ENCODE measurements at regions of chr17 and their contacts with region 1.

Region 1: DNA sequence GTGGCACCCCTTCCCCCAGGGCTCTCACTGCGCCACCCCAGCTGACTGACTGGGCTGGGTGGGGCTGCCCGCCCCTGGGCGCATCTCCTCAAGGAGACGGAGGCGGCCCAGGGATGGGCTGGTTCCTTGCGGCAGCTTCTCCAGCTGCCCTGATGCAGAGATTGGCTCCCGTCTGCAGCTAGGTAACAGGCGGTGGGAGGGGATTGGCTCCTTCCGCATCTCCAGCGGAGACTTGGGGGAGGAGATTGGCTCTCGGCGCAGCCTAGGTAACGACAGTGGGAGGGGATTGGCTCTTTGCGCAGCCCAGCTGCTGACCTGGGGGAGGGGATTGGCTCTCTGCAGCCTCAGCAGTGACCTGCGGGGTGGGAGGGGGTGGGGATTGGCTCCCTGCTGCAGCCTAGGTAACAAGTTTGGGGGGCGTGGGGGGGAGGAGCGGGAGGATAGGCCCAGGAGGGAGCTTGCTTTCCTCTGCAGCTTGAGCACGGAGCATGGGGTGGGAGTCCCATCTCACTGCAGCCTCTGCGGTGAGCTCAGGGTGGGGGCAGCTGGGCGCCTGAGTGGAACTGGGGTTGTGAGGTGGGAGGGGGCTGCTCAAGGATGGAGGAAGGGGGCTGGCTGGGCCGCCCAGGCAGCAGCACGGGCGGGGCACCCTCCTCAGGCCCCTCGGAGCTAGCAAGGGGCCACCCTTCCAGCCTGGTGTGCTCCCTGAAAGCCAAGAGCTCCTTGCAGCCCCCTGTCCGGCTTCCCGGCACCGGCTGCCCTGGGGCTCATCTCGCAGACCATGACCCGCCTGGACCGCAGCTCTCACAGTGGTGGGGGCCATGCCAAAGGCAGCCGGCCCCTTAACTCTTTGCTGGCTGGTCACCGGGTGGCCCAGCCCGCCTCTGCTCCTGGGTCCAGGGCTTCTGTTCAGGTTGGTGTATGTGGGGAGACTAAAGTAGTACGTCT is 6.4 kb downstream of the NFE2L1 start:
- DNase-seq: no peak
- ATAC-seq: peak; percentile 7
- H3K4me3 ChIP-seq: peak overlapping the region; percentile 64; the same call in 1 of the 2 replicates
- H3K27ac ChIP-seq: peak overlapping the region; percentile 68
- H3K4me1 ChIP-seq: peaks cover 29% of the 10 kb centered on the region
- H3K27me3 ChIP-seq: no peaks in the 10 kb centered on the region
- CTCF ChIP-seq: no peak
- EP300 ChIP-seq: no peak
- POLR2A ChIP-seq: no peak; the same call in 1 of the 2 replicates
- RAD21 ChIP-seq: no peak

Region 2: DNA sequence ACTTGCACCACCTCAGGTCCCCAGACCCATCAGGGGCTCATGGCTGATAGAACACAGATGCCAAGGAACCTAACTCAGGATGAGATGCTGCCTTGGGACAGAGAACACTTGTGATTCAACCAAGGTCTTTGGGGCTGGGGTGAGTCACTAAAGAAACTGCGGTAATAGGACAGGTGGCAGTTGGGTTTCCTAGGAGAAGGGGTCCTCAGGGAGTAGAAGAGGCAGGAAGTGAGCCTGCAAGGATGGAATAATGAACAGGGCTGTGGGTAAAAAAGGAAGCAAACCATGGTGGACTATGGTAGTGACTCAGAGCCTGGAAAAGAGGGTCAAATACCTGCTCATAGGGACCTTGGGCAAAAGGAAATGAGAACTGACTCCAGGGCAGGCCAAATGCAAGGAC is 119.7 kb before region 1 on chr17:
- CTCF ChIA-PET with region 1: no interaction called
- POLR2A ChIA-PET with region 1: no interaction called
- RAD21 ChIA-PET with region 1: no interaction called
- SMC1A ChIA-PET with region 1: no interaction called
- in situ Hi-C with region 1: no loop called
- intact Hi-C with region 1: no loop called
- DNase-seq: no peak
- ATAC-seq: no peak
- H3K4me3 ChIP-seq: no peak overlapping the region
- H3K27ac ChIP-seq: no peak overlapping the region
- H3K4me1 ChIP-seq: peaks cover 17% of the 10 kb centered on the region
- H3K27me3 ChIP-seq: no peaks in the 10 kb centered on the region
- CTCF ChIP-seq: no peak
- EP300 ChIP-seq: no peak
- POLR2A ChIP-seq: no peak
- RAD21 ChIP-seq: no peak

Region 3: DNA sequence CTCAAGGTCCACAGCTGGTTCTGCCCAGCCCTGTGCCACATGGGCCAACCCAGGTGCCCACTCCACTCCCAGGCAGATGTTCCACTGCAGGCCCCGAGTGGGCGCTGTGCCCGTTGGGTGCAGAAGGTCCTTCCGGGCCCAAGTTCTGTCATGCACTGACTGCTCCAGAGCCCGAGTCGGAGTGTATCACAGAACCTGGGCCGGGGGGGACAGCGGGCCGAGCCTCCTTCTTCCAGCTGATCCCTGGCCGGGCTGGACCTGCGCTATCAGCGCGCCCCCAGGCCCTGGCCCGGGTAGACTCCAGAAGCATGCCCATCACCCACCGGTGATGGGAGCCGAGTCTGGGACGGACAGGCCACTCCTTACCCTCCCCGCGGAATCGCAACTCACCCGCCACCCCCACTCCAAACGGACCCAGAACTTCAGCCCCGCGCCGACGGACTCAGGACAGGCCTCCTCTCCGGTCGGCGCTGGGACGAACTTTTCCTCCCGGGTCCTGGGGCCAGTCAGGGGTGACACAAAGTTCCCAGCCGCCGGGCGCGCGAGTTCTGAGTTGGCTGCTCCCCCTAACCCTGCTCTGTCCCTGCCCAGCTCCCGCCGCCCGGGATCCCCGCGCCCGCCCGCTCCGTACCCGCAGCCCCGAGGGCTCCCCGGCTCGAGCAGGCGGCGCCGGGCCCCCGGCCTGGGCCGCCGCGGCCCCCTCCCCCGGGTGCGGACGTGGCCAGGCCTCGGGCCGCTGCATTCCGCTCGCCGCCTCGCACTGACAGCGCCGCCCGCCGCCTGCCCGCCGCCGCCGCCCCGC is 17.3 kb before region 1 on chr17 and contains the start of gene COPZ2:
- CTCF ChIA-PET with region 1: interaction called, 77 read pairs
- POLR2A ChIA-PET with region 1: interaction called, 9 read pairs
- RAD21 ChIA-PET with region 1: interaction called, 13 read pairs
- SMC1A ChIA-PET with region 1: interaction called, 3 read pairs
- in situ Hi-C with region 1: no loop called
- intact Hi-C with region 1: no loop called
- DNase-seq: no peak
- ATAC-seq: peak; percentile 93
- H3K4me3 ChIP-seq: peak within 1 kb of the TSS; percentile 73
- H3K27ac ChIP-seq: no peak within 1 kb of the TSS
- H3K4me1 ChIP-seq: peaks cover 9% of the 10 kb centered on the region
- H3K27me3 ChIP-seq: peaks cover 3 to 4% of the 10 kb centered on the region in 2 experiments; a peak in 3 of 4 replicates
- CTCF ChIP-seq: peak; percentile 67 to 91 (median 73)
- EP300 ChIP-seq: no peak
- POLR2A ChIP-seq: no peak
- RAD21 ChIP-seq: peak; percentile 20; the same call in 1 of the 2 replicates
- polyA plus RNA-seq, gene COPZ2: 2.5 to 2.9 TPM

Region 4: DNA sequence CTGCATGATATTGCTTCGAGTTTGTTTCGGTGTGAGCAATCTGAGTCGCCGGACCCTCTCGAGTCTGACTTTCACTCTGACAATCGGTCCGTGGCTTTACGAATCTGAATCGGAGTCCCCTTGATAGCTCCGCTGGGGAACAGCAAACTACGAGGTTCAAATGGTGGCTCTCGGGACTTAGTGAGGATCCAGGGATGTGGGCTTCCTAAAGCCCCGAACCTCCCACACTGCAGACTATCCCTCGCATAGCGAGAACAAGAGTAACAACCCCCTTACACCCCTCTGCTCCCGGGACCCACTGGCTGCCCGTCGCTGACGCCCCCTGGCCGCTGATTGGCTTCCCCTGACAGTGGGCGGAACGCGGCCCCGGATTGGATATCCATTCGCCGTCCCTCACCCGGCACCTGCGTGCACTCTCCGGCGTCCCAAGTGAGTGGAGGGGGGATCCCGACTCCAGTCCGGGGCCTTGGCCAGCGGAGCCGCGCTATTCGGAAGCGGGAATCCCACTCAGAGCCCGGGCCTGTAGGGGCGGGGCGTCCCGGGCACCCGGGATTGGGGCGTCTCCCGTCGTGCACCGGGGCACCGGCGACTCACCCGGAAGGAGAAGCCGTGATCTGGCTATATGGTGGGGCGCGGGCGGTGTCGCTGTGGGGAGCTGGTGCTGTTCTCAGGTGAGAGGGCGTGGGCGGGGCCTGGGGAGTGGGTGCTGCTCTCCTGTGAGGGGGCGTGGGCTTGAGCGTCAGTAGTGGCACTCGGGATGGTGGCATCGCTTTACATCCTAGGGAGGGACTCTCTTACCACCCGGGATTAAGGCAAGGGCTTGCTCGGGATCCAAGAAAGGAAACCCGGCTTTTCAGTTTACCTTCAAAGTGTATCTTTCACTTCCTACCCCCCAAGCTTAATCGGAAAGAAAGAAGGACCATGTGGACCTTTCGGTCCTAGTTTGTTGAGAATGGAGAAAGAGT is 52.9 kb after region 1 on chr17 and contains the start of gene SNX11:
- CTCF ChIA-PET with region 1: interaction called, 8 read pairs
- POLR2A ChIA-PET with region 1: interaction called, 25 read pairs
- RAD21 ChIA-PET with region 1: interaction called, 18 read pairs
- SMC1A ChIA-PET with region 1: interaction called, 5 read pairs
- in situ Hi-C with region 1: no loop called
- intact Hi-C with region 1: no loop called
- DNase-seq: no peak
- ATAC-seq: peak; percentile 88
- H3K4me3 ChIP-seq: peak within 1 kb of the TSS; percentile 97
- H3K27ac ChIP-seq: peak within 1 kb of the TSS; percentile 80
- H3K4me1 ChIP-seq: peaks cover 6% of the 10 kb centered on the region
- H3K27me3 ChIP-seq: no peaks in the 10 kb centered on the region
- CTCF ChIP-seq: peak in 2 of 3 experiments; percentile 7 to 20; a peak in 1 of 6 replicates
- EP300 ChIP-seq: no peak
- POLR2A ChIP-seq: peak; percentile 91
- RAD21 ChIP-seq: no peak
- polyA plus RNA-seq, gene SNX11: 61.3 to 75.6 TPM

Region 5: GRCh38 chr17:49414622-49415350 is 1360.3 kb after region 1 on chr17 and contains the start of gene PHB1:
- CTCF ChIA-PET with region 1: no interaction called
- POLR2A ChIA-PET with region 1: interaction called, 11 read pairs
- RAD21 ChIA-PET with region 1: no interaction called
- SMC1A ChIA-PET with region 1: no interaction called
- in situ Hi-C with region 1: no loop called
- intact Hi-C with region 1: no loop called
- DNase-seq: peak; percentile 95
- ATAC-seq: peak; percentile 100
- H3K4me3 ChIP-seq: peak within 1 kb of the TSS; percentile 92
- H3K27ac ChIP-seq: peak within 1 kb of the TSS; percentile 62
- H3K4me1 ChIP-seq: no peaks in the 10 kb centered on the region
- H3K27me3 ChIP-seq: no peaks in the 10 kb centered on the region
- CTCF ChIP-seq: no peak
- EP300 ChIP-seq: no peak
- POLR2A ChIP-seq: peak; percentile 80
- RAD21 ChIP-seq: no peak
- polyA plus RNA-seq, gene PHB1: 117 to 154 TPM

Measured in GM12878 (cell line).